ENCODE measurements at regions of chr9 and their contacts with region 1.

Region 1: DNA sequence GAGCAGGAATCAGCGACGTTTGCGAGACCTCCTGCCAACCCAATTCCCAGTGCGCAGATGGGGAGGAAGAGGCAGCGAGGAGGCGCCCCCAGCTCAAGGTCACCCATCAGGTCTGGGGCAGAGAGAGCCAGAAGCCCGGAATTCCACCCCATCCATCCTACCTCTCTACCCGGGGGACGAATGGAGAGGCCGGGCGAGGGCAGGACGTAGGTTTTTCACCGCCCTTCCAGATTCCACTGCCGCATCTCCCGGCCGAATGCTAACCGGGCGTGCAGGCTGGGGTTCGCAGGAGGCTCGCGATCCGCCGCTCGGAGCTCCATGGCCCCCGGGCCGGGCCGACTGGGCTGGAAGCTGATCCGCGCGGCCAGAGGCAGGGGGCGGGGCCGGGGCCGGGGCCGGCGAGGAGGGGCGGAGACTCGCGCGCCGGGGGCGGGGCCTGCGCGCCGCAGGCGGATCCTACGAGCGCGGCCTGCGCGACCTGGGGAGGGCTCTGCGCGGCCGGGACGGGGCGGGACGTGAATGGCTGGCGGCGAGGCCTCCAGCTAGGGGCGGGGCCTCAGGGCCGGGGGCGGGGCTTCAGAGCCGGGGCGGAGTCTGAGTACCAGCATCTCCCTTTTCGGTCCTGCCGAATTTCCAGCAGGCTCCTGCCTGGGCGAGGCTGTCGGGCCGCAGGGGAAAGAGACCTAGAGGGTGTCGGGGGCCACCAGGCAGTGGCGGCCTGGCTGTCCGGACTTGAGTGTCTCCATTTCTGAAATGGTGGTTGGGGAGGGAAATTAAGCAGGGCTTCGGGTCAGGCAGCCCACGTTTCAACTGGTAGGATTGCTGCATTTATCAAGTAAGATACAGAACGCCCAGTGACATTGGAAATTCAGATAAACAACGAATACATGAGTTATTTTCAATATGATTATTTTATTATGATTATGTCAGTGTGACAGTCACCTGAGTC is at the start of gene ST6GALNAC4:
- DNase-seq: peak; percentile 90 to 98 (median 95)
- ATAC-seq: peak; percentile 94
- H3K4me3 ChIP-seq: peak within 1 kb of the TSS; percentile 70 to 89
- H3K4me3 Mint-ChIP-seq: peak within 1 kb of the TSS; percentile 89
- H3K27ac ChIP-seq: peak within 1 kb of the TSS; percentile 62 to 72
- H3K27ac Mint-ChIP-seq: peak within 1 kb of the TSS; percentile 92
- H3K4me1 ChIP-seq: peaks cover 46% of the 10 kb centered on the region
- H3K4me1 Mint-ChIP-seq: peaks cover 54% of the 10 kb centered on the region
- H3K27me3 ChIP-seq: peaks cover 0 to 3% of the 10 kb centered on the region in 2 experiments
- H3K27me3 Mint-ChIP-seq: no peaks in the 10 kb centered on the region
- CTCF ChIP-seq: no peak
- total RNA-seq, gene ST6GALNAC4: 40.0 to 47.6 TPM

Region 2: DNA sequence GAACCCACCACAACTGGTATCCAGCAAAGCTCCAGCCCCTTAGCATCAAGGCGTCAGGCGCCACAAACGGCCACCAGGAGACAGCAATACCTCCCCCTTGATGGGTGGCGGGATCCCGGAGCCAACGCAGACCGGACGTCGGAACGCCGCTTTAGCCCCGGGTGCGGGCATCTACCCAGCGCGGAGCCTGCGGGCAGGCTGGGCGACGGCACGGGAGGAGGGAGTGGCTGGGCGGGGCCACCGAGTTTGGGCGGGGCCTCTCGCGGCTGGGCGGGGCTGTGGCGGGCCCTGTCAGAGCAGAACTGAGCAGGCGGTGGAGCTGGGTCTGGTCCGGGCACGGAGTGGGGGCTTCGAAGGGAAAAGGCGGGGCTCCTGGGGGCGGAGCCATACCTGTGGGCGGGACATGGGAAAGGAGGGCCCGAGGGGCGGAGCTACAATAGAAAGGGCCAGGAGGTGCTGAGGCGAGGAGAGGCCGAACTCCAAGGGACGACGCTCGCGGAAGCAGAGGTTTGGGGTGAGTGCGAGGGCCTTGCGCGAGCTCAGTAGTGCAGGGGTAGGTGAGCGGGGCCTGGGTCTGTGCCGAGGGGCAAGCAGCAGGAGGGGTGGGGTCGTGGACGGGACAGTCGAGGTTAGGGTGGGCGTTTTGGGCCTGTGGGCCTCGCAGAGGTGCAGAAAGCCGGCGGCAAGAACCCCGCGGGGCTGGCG is 692.6 kb before region 1 on chr9:
- CTCF ChIA-PET with region 1: no interaction called
- POLR2A ChIA-PET with region 1: no interaction called
- intact Hi-C with region 1: loop called (anchors 1 to 2 kb)
- DNase-seq: peak; percentile 75 to 91 (median 89)
- ATAC-seq: peak; percentile 82
- H3K4me3 ChIP-seq: peak overlapping the region; percentile 66 to 72
- H3K4me3 Mint-ChIP-seq: peak overlapping the region; percentile 82
- H3K27ac ChIP-seq: peak overlapping the region in 1 of 2 experiments; percentile 53
- H3K27ac Mint-ChIP-seq: peak overlapping the region; percentile 77
- H3K4me1 ChIP-seq: peaks cover 33% of the 10 kb centered on the region
- H3K4me1 Mint-ChIP-seq: peaks cover 42% of the 10 kb centered on the region
- H3K27me3 ChIP-seq: no peaks in the 10 kb centered on the region
- H3K27me3 Mint-ChIP-seq: peaks cover 2% of the 10 kb centered on the region
- CTCF ChIP-seq: no peak

Region 3: DNA sequence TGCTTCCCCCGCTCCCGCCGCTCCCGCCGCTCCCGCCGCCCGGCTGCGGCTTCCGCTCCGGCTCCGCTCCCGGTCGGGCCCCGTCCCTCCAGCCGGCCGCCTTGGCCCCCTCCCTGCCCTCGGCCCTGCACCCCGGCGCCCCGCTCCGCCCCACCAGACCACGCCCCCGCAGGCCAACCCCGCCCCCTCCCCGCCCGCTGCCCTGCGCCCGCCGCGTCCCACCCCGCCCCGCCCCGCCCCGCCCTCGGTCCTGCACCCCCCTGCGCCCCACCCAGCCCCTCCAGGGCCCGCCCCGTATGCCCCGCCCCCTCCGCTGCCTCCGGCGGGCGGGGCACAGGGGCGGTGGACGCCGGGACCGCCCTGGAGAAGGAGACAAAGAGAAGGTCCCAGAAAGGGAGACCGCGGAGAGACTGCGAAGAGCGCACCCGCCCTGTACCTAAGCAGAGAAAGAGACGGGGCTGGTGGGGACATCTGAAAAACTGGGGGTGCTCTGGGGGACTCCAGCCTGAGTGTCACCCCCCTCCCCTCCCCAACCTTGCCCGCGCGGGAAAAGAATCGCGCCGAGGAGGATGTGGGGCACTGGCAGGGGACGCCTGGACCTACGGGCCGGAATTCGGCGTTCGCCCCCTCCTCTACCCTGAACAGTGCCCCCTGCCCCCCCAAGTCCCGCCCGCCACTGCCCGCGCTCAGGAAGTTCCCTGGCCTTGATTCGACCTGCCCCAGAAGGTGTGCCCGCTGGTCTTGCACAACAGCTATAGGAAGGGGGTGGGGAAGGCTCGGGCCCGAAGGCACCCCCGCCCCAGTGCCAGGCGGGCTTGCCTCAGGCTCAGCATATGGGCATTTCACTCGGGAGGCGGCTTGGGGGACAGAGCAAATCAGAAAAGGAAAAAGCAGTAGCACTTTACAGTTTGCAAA is 347.7 kb before region 1 on chr9:
- CTCF ChIA-PET with region 1: no interaction called
- POLR2A ChIA-PET with region 1: no interaction called
- intact Hi-C with region 1: loop called (anchors 1 to 5 kb)
- DNase-seq: peak; percentile 49 to 87 (median 73)
- ATAC-seq: peak; percentile 85
- H3K4me3 ChIP-seq: peak overlapping the region; percentile 63 to 65
- H3K4me3 Mint-ChIP-seq: peak overlapping the region; percentile 83
- H3K27ac ChIP-seq: peak overlapping the region; percentile 4 to 21
- H3K27ac Mint-ChIP-seq: peak overlapping the region; percentile 87
- H3K4me1 ChIP-seq: peaks cover 30% of the 10 kb centered on the region
- H3K4me1 Mint-ChIP-seq: peaks cover 20% of the 10 kb centered on the region
- H3K27me3 ChIP-seq: no peaks in the 10 kb centered on the region
- H3K27me3 Mint-ChIP-seq: no peaks in the 10 kb centered on the region
- CTCF ChIP-seq: no peak

Region 4: DNA sequence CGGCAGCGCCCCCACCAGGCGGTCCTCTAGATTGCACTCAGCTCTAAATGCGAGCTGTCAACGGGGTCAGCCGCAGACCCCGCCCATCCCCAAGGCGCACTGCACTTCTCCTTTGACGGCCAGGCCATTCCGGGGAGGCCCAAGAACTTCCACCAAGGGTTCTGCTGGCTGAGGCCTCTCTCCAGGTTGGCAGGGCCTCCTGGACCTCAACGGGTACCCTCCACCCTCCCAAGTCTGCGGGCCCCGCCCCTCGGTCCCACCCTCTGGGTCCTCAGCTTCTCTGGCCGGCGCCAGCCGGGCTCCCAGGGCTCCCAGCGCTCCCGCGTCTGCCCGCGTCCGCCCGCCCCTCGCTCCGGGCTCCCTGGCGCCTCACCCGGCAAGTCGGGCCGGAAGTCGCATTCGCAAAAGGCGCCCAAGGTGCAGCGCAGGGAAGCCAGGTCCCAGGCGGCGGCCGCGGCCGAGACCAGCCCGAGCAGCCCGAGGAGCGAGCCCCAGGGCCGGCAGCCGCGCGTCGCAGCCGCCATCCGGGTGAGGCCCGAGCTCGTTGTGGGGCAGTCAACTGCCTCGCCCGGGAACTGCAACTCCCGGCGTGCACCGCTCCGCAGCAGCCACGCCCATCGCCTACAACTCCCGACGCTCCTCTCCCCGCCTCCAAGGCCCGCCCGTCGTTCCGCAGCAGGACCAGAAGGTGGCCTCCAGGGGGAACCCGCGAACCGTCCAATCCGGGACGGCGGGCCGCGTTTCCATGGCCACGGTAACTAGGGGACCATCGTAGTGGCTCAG is 182.0 kb before region 1 on chr9 and contains the start of gene TOR2A:
- CTCF ChIA-PET with region 1: interaction called, 35 read pairs
- POLR2A ChIA-PET with region 1: interaction called, 7 read pairs
- intact Hi-C with region 1: loop called (anchors 1 kb)
- DNase-seq: peak; percentile 98 to 100 (median 99)
- ATAC-seq: peak; percentile 94
- H3K4me3 ChIP-seq: peak within 1 kb of the TSS; percentile 67 to 79
- H3K4me3 Mint-ChIP-seq: peak within 1 kb of the TSS; percentile 91
- H3K27ac ChIP-seq: peak within 1 kb of the TSS; percentile 59 to 87
- H3K27ac Mint-ChIP-seq: peak within 1 kb of the TSS; percentile 86
- H3K4me1 ChIP-seq: peaks cover 18% of the 10 kb centered on the region
- H3K4me1 Mint-ChIP-seq: peaks cover 7% of the 10 kb centered on the region
- H3K27me3 ChIP-seq: no peaks in the 10 kb centered on the region
- H3K27me3 Mint-ChIP-seq: no peaks in the 10 kb centered on the region
- CTCF ChIP-seq: peak; percentile 80
- total RNA-seq, gene TOR2A: 4.7 to 5.3 TPM

Region 5: GRCh38 chr9:127862075-127863011 is 54.6 kb before region 1 on chr9:
- CTCF ChIA-PET with region 1: interaction called, 18 read pairs
- POLR2A ChIA-PET with region 1: interaction called, 4 read pairs
- intact Hi-C with region 1: no loop called
- DNase-seq: peak; percentile 38 to 86 (median 69)
- ATAC-seq: peak; percentile 65
- H3K4me3 ChIP-seq: peak overlapping the region in 1 of 2 experiments; percentile 26
- H3K4me3 Mint-ChIP-seq: peak overlapping the region; percentile 67
- H3K27ac ChIP-seq: peak overlapping the region; percentile 40 to 79
- H3K27ac Mint-ChIP-seq: peak overlapping the region; percentile 93
- H3K4me1 ChIP-seq: peaks cover 52% of the 10 kb centered on the region
- H3K4me1 Mint-ChIP-seq: peaks cover 55% of the 10 kb centered on the region
- H3K27me3 ChIP-seq: no peaks in the 10 kb centered on the region
- H3K27me3 Mint-ChIP-seq: no peaks in the 10 kb centered on the region
- CTCF ChIP-seq: no peak

Region 6: DNA sequence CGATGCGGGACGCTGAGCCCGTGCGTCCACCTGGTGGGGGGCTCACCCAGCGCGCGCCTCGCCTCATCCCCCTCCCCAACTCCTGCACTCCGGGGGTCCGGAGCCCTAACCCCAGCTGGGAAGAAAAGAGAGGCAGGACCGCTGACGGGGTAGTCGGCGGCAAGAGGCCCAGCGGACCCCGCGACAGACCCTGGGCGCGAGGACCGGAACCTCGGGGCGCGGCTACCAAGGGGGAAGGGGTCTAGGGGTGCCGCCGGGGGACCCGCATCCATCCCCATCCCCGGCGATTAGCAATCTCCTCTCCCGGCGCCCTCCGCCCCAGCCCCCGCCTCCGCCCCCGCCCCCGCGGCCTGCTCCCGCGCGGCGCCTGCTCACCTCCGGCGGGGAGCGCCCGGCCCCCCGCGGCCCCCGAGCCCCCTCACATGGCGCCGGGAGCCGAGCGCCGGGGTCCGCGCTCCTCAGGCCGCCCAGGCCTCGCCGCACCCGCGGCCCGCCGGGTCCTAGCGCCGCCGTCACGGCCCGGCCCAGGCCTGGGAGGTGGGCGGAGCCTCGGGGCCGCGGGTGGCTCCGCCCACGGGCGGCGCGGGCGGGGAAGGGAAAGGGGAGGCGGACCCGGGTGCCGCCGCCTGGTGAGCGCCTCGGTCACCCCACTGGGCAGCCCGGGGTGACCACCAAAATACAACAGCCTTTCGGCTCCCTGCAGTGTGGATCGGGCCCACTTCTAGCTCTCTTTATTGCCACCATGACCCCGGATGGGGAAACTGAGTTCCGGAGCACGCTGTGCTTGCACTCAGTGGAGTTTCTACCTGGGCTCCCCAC is 17.6 kb before region 1 on chr9 and contains the start of gene ST6GALNAC6:
- CTCF ChIA-PET with region 1: interaction called, 7 read pairs
- POLR2A ChIA-PET with region 1: interaction called, 18 read pairs
- intact Hi-C with region 1: loop called (anchors 1 kb)
- DNase-seq: peak; percentile 44 to 85 (median 65)
- ATAC-seq: peak; percentile 80
- H3K4me3 ChIP-seq: peak within 1 kb of the TSS; percentile 77 to 85
- H3K4me3 Mint-ChIP-seq: peak within 1 kb of the TSS; percentile 86
- H3K27ac ChIP-seq: peak within 1 kb of the TSS; percentile 46 to 55
- H3K27ac Mint-ChIP-seq: peak within 1 kb of the TSS; percentile 83
- H3K4me1 ChIP-seq: peaks cover 44% of the 10 kb centered on the region
- H3K4me1 Mint-ChIP-seq: peaks cover 41% of the 10 kb centered on the region
- H3K27me3 ChIP-seq: no peaks in the 10 kb centered on the region
- H3K27me3 Mint-ChIP-seq: no peaks in the 10 kb centered on the region
- CTCF ChIP-seq: no peak
- total RNA-seq, gene ST6GALNAC6: 49.8 to 56.1 TPM

Region 7: GRCh38 chr9:128149001-128149701 is 232.2 kb after region 1 on chr9 and contains the start of gene LCN2:
- CTCF ChIA-PET with region 1: no interaction called
- POLR2A ChIA-PET with region 1: no interaction called
- intact Hi-C with region 1: no loop called
- DNase-seq: no peak
- ATAC-seq: no peak
- H3K4me3 ChIP-seq: no peak within 1 kb of the TSS
- H3K4me3 Mint-ChIP-seq: no peak within 1 kb of the TSS
- H3K27ac ChIP-seq: no peak within 1 kb of the TSS
- H3K27ac Mint-ChIP-seq: no peak within 1 kb of the TSS
- H3K4me1 ChIP-seq: no peaks in the 10 kb centered on the region
- H3K4me1 Mint-ChIP-seq: peaks cover 3% of the 10 kb centered on the region
- H3K27me3 ChIP-seq: no peaks in the 10 kb centered on the region
- H3K27me3 Mint-ChIP-seq: no peaks in the 10 kb centered on the region
- CTCF ChIP-seq: no peak
- total RNA-seq, gene LCN2: not detected

Measured in CD8-positive, alpha-beta T cell (primary cell).